PC-9 (cell line): ENCODE measurements at regions of chr15 and their contacts with region 1.

Region 1: DNA sequence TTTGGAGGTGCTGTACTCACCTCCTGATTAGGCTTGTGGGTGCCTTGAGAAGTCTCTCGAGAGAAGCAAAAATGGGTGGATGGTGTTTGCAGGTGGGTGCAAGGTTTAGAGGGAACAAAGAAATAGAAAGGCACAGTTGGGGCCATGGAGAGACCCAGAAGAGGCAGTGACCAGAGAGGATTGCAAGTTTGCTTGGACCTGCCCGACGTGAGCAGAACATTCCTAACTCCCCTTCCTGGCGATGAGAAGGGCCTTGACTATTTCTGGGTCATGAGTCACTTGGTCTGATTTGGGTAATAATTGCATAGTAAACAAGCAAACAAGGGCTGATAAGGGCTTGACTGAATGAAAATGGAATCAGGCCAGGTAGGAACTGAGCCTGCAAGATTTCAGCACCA is 7.0 kb upstream of the CTSH start:
- DNase-seq: peak; percentile 44 to 96
- H3K4me3 ChIP-seq: peak overlapping the region; percentile 36
- H3K27ac ChIP-seq: peak overlapping the region; percentile 75
- H3K4me1 ChIP-seq: peaks cover 53% of the 10 kb centered on the region
- H3K27me3 ChIP-seq: no peaks in the 10 kb centered on the region
- CTCF ChIP-seq: no peak

Region 2: DNA sequence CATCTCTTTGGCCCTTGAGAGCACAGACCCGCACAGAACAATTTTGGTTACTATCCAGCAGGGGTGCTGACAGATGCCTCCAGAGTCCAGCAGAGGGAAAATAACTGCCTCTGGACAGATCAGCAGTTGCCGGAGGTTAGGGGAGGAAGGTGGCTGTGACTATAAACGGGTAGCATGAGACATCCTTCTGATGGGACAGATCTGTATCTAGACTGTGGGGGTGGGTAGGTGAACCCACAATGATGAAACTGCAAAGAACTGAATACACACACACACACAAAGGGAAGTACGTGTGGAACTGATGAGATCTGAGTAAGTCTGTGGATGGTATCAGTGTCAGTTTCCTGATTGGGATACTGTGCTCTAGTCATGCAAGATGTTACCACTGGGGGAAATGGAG is 161.8 kb before region 1 on chr15:
- CTCF ChIA-PET with region 1: no interaction called
- POLR2A ChIA-PET with region 1: no interaction called
- intact Hi-C with region 1: no loop called
- DNase-seq: no peak
- H3K4me3 ChIP-seq: no peak overlapping the region
- H3K27ac ChIP-seq: no peak overlapping the region
- H3K4me1 ChIP-seq: no peaks in the 10 kb centered on the region
- H3K27me3 ChIP-seq: peaks cover 4% of the 10 kb centered on the region; the same call in 1 of the 2 replicates
- CTCF ChIP-seq: no peak

Region 3: DNA sequence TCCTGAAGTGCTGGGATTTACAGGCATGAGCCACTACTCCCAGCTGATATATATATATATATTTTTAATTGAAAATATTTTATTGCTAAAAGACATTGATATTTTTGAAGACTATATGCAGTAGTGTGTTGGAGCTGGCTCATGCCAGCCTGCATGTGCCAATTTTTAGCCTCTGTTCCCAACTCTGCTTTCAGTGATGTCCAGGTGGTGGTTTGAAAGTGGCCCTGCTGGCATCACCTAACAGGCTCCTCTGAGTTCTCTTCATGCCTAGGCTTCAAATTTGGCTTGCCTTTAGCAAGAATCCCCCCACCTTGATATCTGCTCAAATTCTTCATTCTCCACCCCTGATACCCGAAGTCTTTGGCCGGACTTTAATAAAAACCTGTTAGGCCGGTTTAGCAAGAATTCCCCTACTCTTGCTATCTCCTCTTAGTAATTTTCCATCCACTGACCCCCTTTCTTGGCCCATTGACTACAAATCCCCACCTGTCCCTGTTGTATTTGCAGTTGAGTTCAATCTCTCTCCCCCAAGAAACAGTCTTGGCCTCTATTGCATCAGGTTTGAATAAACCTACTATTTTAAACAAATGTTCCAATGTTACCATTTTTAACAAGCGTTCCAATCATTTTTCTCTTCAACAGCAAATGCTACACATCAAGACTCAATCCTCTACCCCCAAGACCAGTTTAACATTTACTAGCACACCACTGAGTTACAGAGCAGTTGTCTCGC is 16.9 kb after region 1 on chr15:
- CTCF ChIA-PET with region 1: no interaction called
- POLR2A ChIA-PET with region 1: no interaction called
- intact Hi-C with region 1: loop called (anchors 1 kb)
- DNase-seq: peak; percentile 40 to 72
- H3K4me3 ChIP-seq: no peak overlapping the region; the same call in 1 of the 2 replicates
- H3K27ac ChIP-seq: peak overlapping the region; percentile 52
- H3K4me1 ChIP-seq: peaks cover 52% of the 10 kb centered on the region
- H3K27me3 ChIP-seq: no peaks in the 10 kb centered on the region
- CTCF ChIP-seq: no peak